ENCODE measurements at regions of chr4 and their contacts with region 1.

Region 1: GRCh38 chr4:48269861-48270522 is 354 bp upstream of the TEC start:
- DNase-seq: peak; percentile 88
- ATAC-seq: peak; percentile 89
- H3K4me3 ChIP-seq: peak overlapping the region; percentile 59 to 71
- H3K27ac ChIP-seq: peak overlapping the region; percentile 93
- H3K4me1 ChIP-seq: peaks cover 2 to 25% of the 10 kb centered on the region in 2 experiments; a peak in 3 of 4 replicates
- H3K27me3 ChIP-seq: no peaks in the 10 kb centered on the region
- CTCF ChIP-seq: peak in 2 of 3 experiments; percentile 14 to 17; a peak in 2 of 6 replicates
- POLR2A ChIP-seq: peak; percentile 16
- RAD21 ChIP-seq: no peak

Region 2: GRCh38 chr4:48141048-48141447 is 128.9 kb before region 1 on chr4:
- CTCF ChIA-PET with region 1: no interaction called
- POLR2A ChIA-PET with region 1: no interaction called
- RAD21 ChIA-PET with region 1: no interaction called
- intact Hi-C with region 1: loop called (anchors 5 kb)
- DNase-seq: no peak
- ATAC-seq: peak; percentile 65
- H3K4me3 ChIP-seq: no peak overlapping the region
- H3K27ac ChIP-seq: no peak overlapping the region
- H3K4me1 ChIP-seq: no peaks in the 10 kb centered on the region
- H3K27me3 ChIP-seq: no peaks in the 10 kb centered on the region
- CTCF ChIP-seq: peak; percentile 31 to 56 (median 38); a peak in 4 of 6 replicates
- POLR2A ChIP-seq: no peak
- RAD21 ChIP-seq: peak; percentile 57

Measured in HCT116 (cell line).